ENCODE measurements at regions of chr3 and their contacts with region 1.

Region 1: DNA sequence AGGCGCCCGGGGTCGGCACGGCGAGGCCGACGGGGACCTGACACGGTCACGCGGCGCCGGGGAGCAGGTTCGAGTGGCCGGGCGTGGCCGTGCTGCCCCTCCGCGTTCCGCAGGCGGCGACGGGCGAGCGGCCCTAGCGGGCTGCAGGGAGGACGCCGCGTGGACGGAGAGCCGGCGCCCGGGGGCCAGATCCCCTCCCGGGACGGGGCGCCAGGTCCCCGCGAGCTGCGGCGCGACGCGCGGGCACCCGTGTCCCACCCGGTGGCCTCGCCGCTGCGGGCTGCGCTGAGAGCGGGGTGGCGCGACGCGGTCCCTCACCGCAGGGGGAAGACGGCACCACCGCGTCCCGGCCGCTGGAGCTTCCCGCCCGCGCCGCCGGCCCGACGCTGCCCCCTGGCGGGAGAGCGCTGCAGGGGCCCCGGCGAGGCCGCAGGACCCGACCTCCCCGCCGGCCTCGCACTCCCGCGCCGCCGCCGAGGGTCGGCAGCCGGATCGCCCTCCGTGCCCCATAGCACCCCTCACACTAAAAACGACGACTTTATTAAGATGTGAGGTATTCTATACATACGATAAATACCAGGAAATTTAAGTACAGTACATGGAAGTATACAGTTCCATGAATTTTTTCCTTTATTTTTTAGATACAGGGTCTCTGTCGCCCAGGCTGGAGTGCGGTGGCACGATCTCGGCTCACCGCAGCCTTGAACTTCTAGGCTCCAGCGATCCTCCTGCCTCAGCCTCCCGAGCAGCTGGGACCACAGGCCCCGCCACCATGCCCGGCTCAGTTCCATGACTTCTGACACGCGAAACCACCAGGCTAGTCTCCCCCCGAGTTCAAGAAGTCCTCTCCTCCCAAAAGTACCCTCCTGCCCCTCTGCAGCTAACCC is 1.3 kb upstream of the PIGZ start:
- DNase-seq: peak; percentile 70 to 85
- ATAC-seq: peak; percentile 86 to 93 (median 90)
- H3K4me3 ChIP-seq: peak overlapping the region; percentile 94
- H3K27ac ChIP-seq: peak overlapping the region; percentile 81
- H3K4me1 ChIP-seq: peaks cover 6% of the 10 kb centered on the region
- H3K27me3 ChIP-seq: no peaks in the 10 kb centered on the region
- CTCF ChIP-seq: peak; percentile 92

Region 2: GRCh38 chr3:196837819-196838420 is 132.0 kb before region 1 on chr3:
- intact Hi-C with region 1: loop called (anchors 2 to 5 kb)
- DNase-seq: peak; percentile 60 to 78
- ATAC-seq: peak; percentile 76 to 94 (median 92)
- H3K4me3 ChIP-seq: no peak overlapping the region
- H3K27ac ChIP-seq: no peak overlapping the region
- H3K4me1 ChIP-seq: no peaks in the 10 kb centered on the region
- H3K27me3 ChIP-seq: no peaks in the 10 kb centered on the region
- CTCF ChIP-seq: peak; percentile 78

Region 3: GRCh38 chr3:197029511-197030167 is 59.7 kb after region 1 on chr3 and contains the start of gene MELTF:
- intact Hi-C with region 1: loop called in 1 of 2 experiments (anchors 1 kb)
- DNase-seq: peak; percentile 67 to 79
- ATAC-seq: peak; percentile 55 to 70 (median 68)
- H3K4me3 ChIP-seq: peak within 1 kb of the TSS; percentile 57
- H3K27ac ChIP-seq: no peak within 1 kb of the TSS
- H3K4me1 ChIP-seq: peaks cover 9% of the 10 kb centered on the region
- H3K27me3 ChIP-seq: peaks cover 0 to 28% (median 14%) of the 10 kb centered on the region in 3 donors
- CTCF ChIP-seq: peak; percentile 74
- total RNA-seq, gene MELTF: 0.54 to 0.97 (median 0.72) TPM

Region 4: GRCh38 chr3:197331131-197331530 is 361.2 kb after region 1 on chr3:
- intact Hi-C with region 1: no loop called
- DNase-seq: no peak
- ATAC-seq: no peak
- H3K4me3 ChIP-seq: no peak overlapping the region
- H3K27ac ChIP-seq: no peak overlapping the region
- H3K4me1 ChIP-seq: peaks cover 13% of the 10 kb centered on the region
- H3K27me3 ChIP-seq: no peaks in the 10 kb centered on the region
- CTCF ChIP-seq: no peak